Left colon (tissue), 2 donors: ENCODE measurements at regions of chr1 and their contacts with region 1.

Region 1: GRCh38 chr1:167442124-167442848 is 76.0 kb downstream of the CD247 start:
- DNase-seq: peak; percentile 95 to 98
- ATAC-seq: peak; percentile 98

Region 2: DNA sequence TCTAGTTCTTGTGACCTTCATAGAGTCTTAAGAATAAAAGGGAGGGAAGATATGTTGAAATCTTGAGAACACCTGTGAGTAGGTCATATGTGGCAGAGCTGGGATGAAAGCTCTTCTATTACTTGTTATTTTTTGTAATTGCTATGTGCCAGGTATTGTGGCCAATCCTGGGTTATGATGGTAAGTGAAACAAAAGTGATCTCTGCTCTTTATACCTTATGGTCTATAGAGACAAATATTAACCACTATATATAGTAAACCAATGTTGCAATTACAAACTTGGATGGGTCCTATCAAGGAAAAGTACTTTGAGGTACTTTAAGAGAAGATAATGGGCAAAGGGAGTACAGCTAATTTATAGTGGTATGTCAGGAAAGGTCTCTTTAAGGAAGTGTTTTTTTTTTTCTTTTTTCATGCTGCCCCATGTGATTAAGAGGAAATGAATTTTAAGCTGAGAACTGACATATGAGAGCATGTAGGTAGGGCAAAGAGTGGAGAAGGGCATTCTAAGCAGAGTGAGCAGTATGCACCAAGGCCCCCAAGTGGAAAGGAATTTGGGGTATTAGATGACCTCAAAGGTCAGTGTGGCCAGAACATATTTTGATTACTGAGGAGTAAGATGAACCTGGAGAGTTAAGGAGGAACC is 178.3 kb before region 1 on chr1:
- intact Hi-C with region 1: loop called in 1 of 2 experiments (anchors 5 kb)
- DNase-seq: no peak
- ATAC-seq: peak; percentile 49